ENCODE measurements at regions of chr2 and their contacts with region 1.

Region 1: GRCh38 chr2:219171231-219171651 is 1.4 kb upstream of the SLC23A3 start:
- DNase-seq: no peak
- ATAC-seq: no peak
- H3K4me3 Mint-ChIP-seq: no peak overlapping the region
- H3K27ac Mint-ChIP-seq: no peak overlapping the region
- H3K4me1 Mint-ChIP-seq: peaks cover 27% of the 10 kb centered on the region
- H3K27me3 Mint-ChIP-seq: no peaks in the 10 kb centered on the region

Region 2: DNA sequence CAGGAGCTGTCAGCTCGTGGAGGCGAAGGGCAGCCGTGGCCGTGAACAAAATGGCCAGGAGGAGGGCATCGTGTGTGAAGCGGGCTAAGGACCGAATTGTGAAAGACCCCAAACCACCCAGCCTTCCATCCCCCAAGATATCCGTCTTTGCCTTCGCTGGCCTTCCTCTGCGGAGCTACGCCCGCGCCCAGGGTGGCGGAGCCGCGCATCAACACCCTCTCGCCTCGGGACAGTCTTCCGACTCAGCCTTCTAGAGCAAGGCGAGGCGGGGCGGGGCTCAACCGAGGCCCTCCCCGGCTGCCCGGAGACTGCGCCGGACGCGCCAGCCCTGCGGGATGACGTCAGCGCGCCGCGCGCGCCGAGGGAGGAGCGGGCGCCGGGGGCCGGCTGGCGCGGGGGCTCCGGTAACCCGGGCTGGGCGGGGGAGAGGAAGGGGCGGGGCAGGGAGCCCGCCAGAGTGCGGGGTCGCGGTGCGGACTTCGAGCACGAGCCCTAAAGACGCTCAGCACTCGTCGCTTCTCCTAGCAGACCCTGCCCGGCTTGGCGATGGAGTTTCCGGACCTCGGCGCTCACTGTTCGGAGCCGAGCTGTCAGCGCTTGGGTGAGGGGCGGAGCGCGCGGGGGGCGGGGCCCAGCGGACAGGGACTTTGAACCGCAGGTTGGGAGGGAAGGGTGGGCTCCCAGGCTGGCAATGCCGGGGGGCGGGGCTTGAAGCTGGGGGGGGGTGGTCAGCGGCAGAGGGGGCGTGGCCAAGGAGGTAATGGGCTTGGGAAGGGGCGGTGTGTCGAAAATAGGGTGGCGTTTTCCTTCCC is 35.4 kb after region 1 on chr2 and contains the start of gene ZFAND2B:
- POLR2A ChIA-PET with region 1: interaction called, 92 read pairs
- DNase-seq: peak; percentile 99
- ATAC-seq: peak; percentile 97
- H3K4me3 Mint-ChIP-seq: peak within 1 kb of the TSS; percentile 85
- H3K27ac Mint-ChIP-seq: peak within 1 kb of the TSS; percentile 93
- H3K4me1 Mint-ChIP-seq: peaks cover 47% of the 10 kb centered on the region
- H3K27me3 Mint-ChIP-seq: no peaks in the 10 kb centered on the region
- total RNA-seq, gene ZFAND2B: 68.1 to 69.8 TPM

Measured in activated naive CD8-positive, alpha-beta T cell treated with anti-CD3 and anti-CD28 coated beads, Interleukin-2, amount 10 ng/mL, durations not matched to agents 7 days and 5 days (primary cell).